ENCODE measurements at regions of chrX and their contacts with region 1.

Region 1: GRCh38 chrX:134244035-134244434 is 7.1 kb downstream of the CCDC160 start:
- DNase-seq: peak; percentile 24
- H3K4me3 Mint-ChIP-seq: no peak overlapping the region
- H3K27ac Mint-ChIP-seq: peak overlapping the region; percentile 5
- H3K4me1 Mint-ChIP-seq: peaks cover 55% of the 10 kb centered on the region
- H3K27me3 Mint-ChIP-seq: no peaks in the 10 kb centered on the region
- CTCF ChIP-seq: no peak

Region 2: GRCh38 chrX:133935071-133935470 is 309.0 kb before region 1 on chrX:
- CTCF ChIA-PET with region 1: no interaction called
- intact Hi-C with region 1: no loop called
- DNase-seq: no peak
- H3K4me3 Mint-ChIP-seq: no peak overlapping the region
- H3K27ac Mint-ChIP-seq: no peak overlapping the region
- H3K4me1 Mint-ChIP-seq: no peaks in the 10 kb centered on the region
- H3K27me3 Mint-ChIP-seq: no peaks in the 10 kb centered on the region
- CTCF ChIP-seq: no peak

Region 3: GRCh38 chrX:134171661-134172587 is 72.1 kb before region 1 on chrX:
- CTCF ChIA-PET with region 1: no interaction called
- intact Hi-C with region 1: loop called (anchors 5 kb)
- DNase-seq: peak; percentile 11
- H3K4me3 Mint-ChIP-seq: peak overlapping the region; percentile 86
- H3K27ac Mint-ChIP-seq: no peak overlapping the region
- H3K4me1 Mint-ChIP-seq: peaks cover 6% of the 10 kb centered on the region
- H3K27me3 Mint-ChIP-seq: peaks cover 35% of the 10 kb centered on the region
- CTCF ChIP-seq: no peak

Measured in Calu3 (cell line).